HEK293T (cell line): ENCODE measurements at regions of chr19 and their contacts with region 1.

Region 1: DNA sequence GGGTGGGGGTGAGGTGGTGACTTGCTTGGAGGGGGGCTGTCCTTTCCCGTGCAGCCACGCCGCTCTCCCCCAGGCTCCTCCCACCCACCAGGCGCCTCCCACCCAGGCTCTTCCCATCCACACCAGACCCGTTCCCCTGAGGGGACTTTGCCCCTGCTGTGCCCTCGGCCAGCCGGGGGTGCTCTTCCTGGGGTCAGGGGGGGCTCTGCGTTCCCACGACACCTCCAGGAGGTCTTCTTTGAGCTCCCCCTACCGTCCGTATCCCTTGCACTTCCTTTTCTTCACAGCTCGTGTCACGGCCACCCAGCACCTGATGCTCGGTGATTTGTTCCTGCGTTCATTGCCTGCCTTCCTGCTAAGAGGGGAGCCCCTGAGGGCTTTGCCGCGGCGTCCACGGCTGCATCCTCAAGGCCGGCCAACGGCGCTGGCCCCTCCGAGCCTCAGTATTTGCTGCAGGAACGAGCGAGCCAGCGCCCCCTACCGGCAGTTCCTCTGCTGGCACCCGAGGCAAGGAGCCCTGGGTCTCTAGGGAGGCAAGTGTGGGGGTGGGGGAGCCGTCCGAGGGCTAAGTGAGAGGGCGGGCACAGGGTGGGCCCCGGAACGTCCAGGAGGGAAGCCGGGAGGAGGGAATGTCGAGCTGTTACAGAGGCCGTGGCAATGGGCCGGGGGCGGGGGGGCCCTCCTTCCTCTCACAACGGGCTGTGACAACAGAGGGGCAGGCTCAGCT is 11.8 kb downstream of the LRRC4B start:
- DNase-seq: peak; percentile 92

Region 2: GRCh38 chr19:50542943-50543342 is 13.5 kb before region 1 on chr19:
- CTCF ChIA-PET with region 1: interaction called, 27 read pairs
- POLR2A ChIA-PET with region 1: interaction called, 3 read pairs
- DNase-seq: no peak